HEK293T (cell line): ENCODE measurements at regions of chr6 and their contacts with region 1.

Region 1: GRCh38 chr6:137799950-137800568 is 67.0 kb upstream of the TNFAIP3 start:
- DNase-seq: peak; percentile 56

Region 2: GRCh38 chr6:137811121-137811915 is 11.3 kb after region 1 on chr6:
- CTCF ChIA-PET with region 1: interaction called, 15 read pairs
- POLR2A ChIA-PET with region 1: no interaction called
- DNase-seq: peak; percentile 66

Region 3: GRCh38 chr6:137944793-137945498 is 144.9 kb after region 1 on chr6:
- CTCF ChIA-PET with region 1: interaction called, 11 read pairs
- POLR2A ChIA-PET with region 1: no interaction called
- DNase-seq: peak; percentile 67